Caco-2 (cell line): ENCODE measurements at regions of chr2 and their contacts with region 1.

Region 1: GRCh38 chr2:176814306-176815052 is 398.1 kb upstream of the HNRNPA3 start:
- DNase-seq: peak in 1 of 2 experiments; percentile 12
- H3K4me3 ChIP-seq: no peak overlapping the region
- H3K4me3 Mint-ChIP-seq: no peak overlapping the region
- H3K27ac Mint-ChIP-seq: no peak overlapping the region
- H3K4me1 ChIP-seq: no peaks in the 10 kb centered on the region
- H3K4me1 Mint-ChIP-seq: no peaks in the 10 kb centered on the region
- H3K27me3 ChIP-seq: no peaks in the 10 kb centered on the region
- H3K27me3 Mint-ChIP-seq: peaks cover 3% of the 10 kb centered on the region
- CTCF ChIP-seq: peak in 1 of 2 experiments; percentile 56

Region 2: DNA sequence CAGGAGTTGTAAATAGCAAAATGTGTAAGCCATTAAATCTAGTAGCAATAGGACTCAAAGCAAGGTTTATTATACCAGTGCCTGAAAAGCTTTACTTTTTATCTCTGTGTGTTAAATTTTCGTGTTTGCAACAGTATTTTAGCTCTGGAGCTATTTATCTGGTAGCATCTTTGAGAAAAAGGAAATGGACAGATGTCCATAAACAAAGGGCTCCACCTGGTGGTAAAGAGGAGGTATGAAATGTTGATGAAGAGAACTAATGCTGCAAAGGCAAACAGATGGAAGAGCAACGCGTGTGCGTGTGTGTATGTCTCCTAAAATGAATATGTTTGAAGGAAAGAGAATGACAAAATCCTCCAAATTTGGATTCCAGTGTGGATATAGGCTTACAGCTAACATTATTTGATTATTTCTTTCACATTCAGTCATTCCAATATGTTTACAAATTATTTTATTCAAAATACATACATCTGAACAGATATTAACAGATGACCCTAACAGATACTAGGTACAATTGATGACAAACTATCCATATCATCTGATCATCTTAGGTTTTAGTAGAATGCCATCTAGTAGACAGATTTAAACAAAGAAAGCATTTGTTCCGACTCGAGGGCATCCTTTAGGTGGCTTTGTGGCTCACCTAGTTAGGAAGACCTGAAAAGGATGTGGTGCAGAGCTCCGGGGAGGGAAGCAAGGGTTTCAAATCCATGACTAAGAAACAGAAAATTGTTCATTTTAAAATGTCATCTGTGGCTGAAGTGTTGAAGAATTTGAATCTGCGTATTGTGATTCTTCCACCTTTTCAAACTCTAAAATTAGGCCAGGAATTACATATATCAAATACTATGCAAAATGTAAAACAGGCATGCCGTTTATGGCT is 161.9 kb before region 1 on chr2:
- CTCF ChIA-PET with region 1: interaction called, 7 read pairs
- POLR2A ChIA-PET with region 1: no interaction called
- intact Hi-C with region 1: loop called (anchors 1 kb)
- DNase-seq: peak in 1 of 2 experiments; percentile 48
- H3K4me3 ChIP-seq: no peak overlapping the region
- H3K4me3 Mint-ChIP-seq: no peak overlapping the region
- H3K27ac Mint-ChIP-seq: no peak overlapping the region
- H3K4me1 ChIP-seq: no peaks in the 10 kb centered on the region
- H3K4me1 Mint-ChIP-seq: no peaks in the 10 kb centered on the region
- H3K27me3 ChIP-seq: peaks cover 1% of the 10 kb centered on the region; the same call in 1 of the 2 replicates
- H3K27me3 Mint-ChIP-seq: peaks cover 19% of the 10 kb centered on the region
- CTCF ChIP-seq: peak; percentile 71 to 74

Region 3: GRCh38 chr2:176679061-176679669 is 135.3 kb before region 1 on chr2:
- CTCF ChIA-PET with region 1: no interaction called
- POLR2A ChIA-PET with region 1: no interaction called
- intact Hi-C with region 1: loop called (anchors 1 kb)
- DNase-seq: no peak
- H3K4me3 ChIP-seq: no peak overlapping the region
- H3K4me3 Mint-ChIP-seq: no peak overlapping the region
- H3K27ac Mint-ChIP-seq: no peak overlapping the region
- H3K4me1 ChIP-seq: peaks cover 8% of the 10 kb centered on the region; the same call in 1 of the 2 replicates
- H3K4me1 Mint-ChIP-seq: no peaks in the 10 kb centered on the region
- H3K27me3 ChIP-seq: no peaks in the 10 kb centered on the region; the same call in 1 of the 2 replicates
- H3K27me3 Mint-ChIP-seq: peaks cover 12% of the 10 kb centered on the region
- CTCF ChIP-seq: no peak